Sigmoid colon (tissue), 7 donors: ENCODE measurements at regions of chr14 and their contacts with region 1.

Region 1: GRCh38 chr14:92680781-92681650 is 67.4 kb downstream of the LGMN start:
- DNase-seq: peak; percentile 89
- H3K4me3 ChIP-seq: no peak overlapping the region
- H3K27ac ChIP-seq: peak overlapping the region in 3 of 4 donors; percentile 58 to 66 (median 59)
- H3K4me1 ChIP-seq: peaks cover 0 to 16% (median 11%) of the 10 kb centered on the region in 4 donors
- H3K27me3 ChIP-seq: no peaks in the 10 kb centered on the region
- CTCF ChIP-seq: peak; percentile 70 to 95 (median 92)
- EP300 ChIP-seq: no peak
- POLR2A ChIP-seq: no peak

Region 2: DNA sequence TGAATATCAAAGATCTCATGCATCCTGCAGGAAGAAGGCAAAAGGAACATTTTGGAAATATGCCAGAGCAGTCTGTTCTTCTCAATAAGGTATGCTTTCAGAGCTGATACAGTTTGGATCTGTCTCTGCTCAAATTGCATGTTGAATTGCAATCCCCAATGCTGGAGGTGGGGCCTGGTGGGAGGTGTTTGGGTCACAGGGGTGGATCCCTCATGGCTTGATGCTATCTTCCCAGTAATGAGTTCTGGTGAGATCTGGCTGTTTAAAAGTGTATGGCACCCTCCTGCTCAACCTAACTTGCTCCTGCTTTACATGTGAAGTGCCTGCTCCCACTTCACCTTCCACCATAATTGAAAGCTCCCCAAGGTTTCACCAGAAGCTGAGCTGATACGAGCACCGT is 90.8 kb before region 1 on chr14:
- intact Hi-C with region 1: loop called (anchors 5 kb)
- DNase-seq: peak; percentile 32
- H3K4me3 ChIP-seq: no peak overlapping the region
- H3K27ac ChIP-seq: peak overlapping the region in 2 of 4 donors; percentile 85 to 88
- H3K4me1 ChIP-seq: peaks cover 0 to 53% (median 41%) of the 10 kb centered on the region in 4 donors
- H3K27me3 ChIP-seq: no peaks in the 10 kb centered on the region
- CTCF ChIP-seq: no peak
- EP300 ChIP-seq: no peak
- POLR2A ChIP-seq: no peak